IMR-90 (cell line): ENCODE measurements at regions of chr1 and their contacts with region 1.

Region 1: GRCh38 chr1:198174297-198174696 is 17.5 kb downstream of the NEK7 start:
- DNase-seq: peak; percentile 43
- ATAC-seq: peak; percentile 60
- H3K4me3 ChIP-seq: no peak overlapping the region
- H3K27ac ChIP-seq: no peak overlapping the region
- H3K4me1 ChIP-seq: peaks cover 17% of the 10 kb centered on the region
- H3K27me3 ChIP-seq: no peaks in the 10 kb centered on the region
- CTCF ChIP-seq: no peak
- POLR2A ChIP-seq: no peak
- RAD21 ChIP-seq: no peak

Region 2: DNA sequence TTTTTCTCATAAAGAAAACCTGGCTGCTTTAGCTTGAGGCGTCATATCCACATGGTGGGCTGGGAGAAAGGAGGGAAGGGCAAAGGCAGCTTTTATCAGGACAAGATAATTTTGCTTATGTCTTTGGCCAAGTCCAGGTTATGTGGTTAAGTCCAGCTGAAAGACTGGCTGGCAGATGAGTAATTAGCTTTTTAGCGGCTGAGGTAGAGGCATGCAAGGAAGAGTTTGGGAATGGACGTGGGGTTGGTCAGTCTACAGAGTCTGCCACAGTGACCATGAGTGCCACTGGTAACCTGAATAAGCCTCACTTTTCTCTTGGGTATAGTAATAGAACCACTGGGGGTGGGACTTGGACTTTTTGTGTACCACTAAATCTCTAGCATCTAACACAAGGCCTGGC is 22.3 kb after region 1 on chr1:
- CTCF ChIA-PET with region 1: no interaction called
- POLR2A ChIA-PET with region 1: no interaction called
- dilution Hi-C with region 1: no loop called
- in situ Hi-C with region 1: no loop called
- intact Hi-C with region 1: loop called (anchors 2 kb)
- DNase-seq: no peak
- ATAC-seq: no peak
- H3K4me3 ChIP-seq: no peak overlapping the region
- H3K27ac ChIP-seq: no peak overlapping the region
- H3K4me1 ChIP-seq: peaks cover 2% of the 10 kb centered on the region
- H3K27me3 ChIP-seq: no peaks in the 10 kb centered on the region
- CTCF ChIP-seq: no peak
- POLR2A ChIP-seq: no peak
- RAD21 ChIP-seq: no peak

Region 3: DNA sequence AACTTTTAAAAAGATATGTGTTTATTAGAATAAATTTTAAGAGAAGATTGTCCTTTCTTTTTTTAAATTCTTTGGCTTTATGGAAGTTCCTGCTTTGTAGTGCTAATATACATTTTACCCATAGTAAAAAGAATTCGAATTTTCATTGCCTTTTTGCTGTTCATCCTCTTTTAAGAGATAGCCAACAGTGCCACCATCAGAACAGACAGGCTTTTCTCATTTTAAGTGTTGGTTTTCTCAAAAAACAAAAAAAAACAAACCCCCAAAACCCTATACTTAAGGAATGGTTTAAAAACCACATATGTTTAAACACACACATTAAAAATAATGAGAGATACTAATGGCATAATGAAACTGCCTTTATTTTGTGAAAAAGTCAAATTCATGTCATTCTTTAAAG is 101.3 kb after region 1 on chr1:
- CTCF ChIA-PET with region 1: no interaction called
- POLR2A ChIA-PET with region 1: no interaction called
- dilution Hi-C with region 1: no loop called
- in situ Hi-C with region 1: no loop called
- intact Hi-C with region 1: loop called (anchors 5 kb)
- DNase-seq: no peak
- ATAC-seq: no peak
- H3K4me3 ChIP-seq: no peak overlapping the region
- H3K27ac ChIP-seq: no peak overlapping the region
- H3K4me1 ChIP-seq: peaks cover 5% of the 10 kb centered on the region
- H3K27me3 ChIP-seq: no peaks in the 10 kb centered on the region
- CTCF ChIP-seq: no peak; the same call in 1 of the 2 replicates
- POLR2A ChIP-seq: no peak
- RAD21 ChIP-seq: 0 out of 2 replicates have a peak, but pooled peaks have one; percentile 21